ENCODE measurements at regions of chr1 and their contacts with region 1.

Region 1: GRCh38 chr1:199948587-199949280 is 78.8 kb upstream of the NR5A2 start:
- DNase-seq: peak; percentile 14
- ATAC-seq: peak; percentile 51
- H3K4me3 Mint-ChIP-seq: no peak overlapping the region
- H3K27ac Mint-ChIP-seq: no peak overlapping the region
- H3K4me1 Mint-ChIP-seq: peaks cover 2% of the 10 kb centered on the region
- H3K27me3 Mint-ChIP-seq: peaks cover 42% of the 10 kb centered on the region
- CTCF ChIP-seq: no peak

Region 2: GRCh38 chr1:199931653-199932377 is 16.9 kb before region 1 on chr1:
- CTCF ChIA-PET with region 1: no interaction called
- POLR2A ChIA-PET with region 1: no interaction called
- intact Hi-C with region 1: no loop called
- DNase-seq: peak; percentile 38
- ATAC-seq: no peak
- H3K4me3 Mint-ChIP-seq: no peak overlapping the region
- H3K27ac Mint-ChIP-seq: no peak overlapping the region
- H3K4me1 Mint-ChIP-seq: peaks cover 9% of the 10 kb centered on the region
- H3K27me3 Mint-ChIP-seq: peaks cover 20% of the 10 kb centered on the region
- CTCF ChIP-seq: no peak

Region 3: GRCh38 chr1:199982606-199983005 is 33.9 kb after region 1 on chr1:
- CTCF ChIA-PET with region 1: no interaction called
- POLR2A ChIA-PET with region 1: no interaction called
- intact Hi-C with region 1: no loop called
- DNase-seq: no peak
- ATAC-seq: no peak
- H3K4me3 Mint-ChIP-seq: no peak overlapping the region
- H3K27ac Mint-ChIP-seq: no peak overlapping the region
- H3K4me1 Mint-ChIP-seq: no peaks in the 10 kb centered on the region
- H3K27me3 Mint-ChIP-seq: peaks cover 3% of the 10 kb centered on the region
- CTCF ChIP-seq: no peak

Region 4: DNA sequence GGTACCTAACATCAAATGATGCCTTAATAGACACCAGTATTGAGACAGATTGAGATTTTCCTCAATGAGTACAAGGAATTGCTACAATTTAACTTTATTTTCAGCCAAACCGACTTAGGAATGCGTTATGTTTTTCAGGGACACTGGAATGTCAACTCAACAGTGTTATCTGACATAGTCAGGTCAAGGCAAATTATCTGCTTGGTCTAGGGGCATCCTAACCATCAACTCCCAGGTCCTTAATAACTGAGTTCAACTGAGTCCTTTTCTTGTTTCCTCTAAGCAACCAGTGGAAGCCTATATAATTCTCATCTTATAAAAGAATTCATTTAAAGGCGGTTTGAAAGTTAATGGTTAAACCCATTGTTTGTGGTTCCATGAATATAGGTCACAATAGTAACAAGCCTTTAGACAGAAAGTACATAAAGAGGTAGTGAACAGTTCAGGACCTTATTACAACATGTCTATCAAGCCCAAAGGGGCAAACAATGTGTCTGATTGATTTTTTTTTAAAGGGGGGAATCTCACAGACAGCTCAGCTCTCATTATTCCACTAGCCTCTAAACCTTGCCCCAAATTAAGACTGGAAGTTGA is 46.5 kb after region 1 on chr1:
- CTCF ChIA-PET with region 1: no interaction called
- POLR2A ChIA-PET with region 1: no interaction called
- intact Hi-C with region 1: no loop called
- DNase-seq: no peak
- ATAC-seq: no peak
- H3K4me3 Mint-ChIP-seq: no peak overlapping the region
- H3K27ac Mint-ChIP-seq: no peak overlapping the region
- H3K4me1 Mint-ChIP-seq: no peaks in the 10 kb centered on the region
- H3K27me3 Mint-ChIP-seq: peaks cover 4% of the 10 kb centered on the region
- CTCF ChIP-seq: no peak

Region 5: DNA sequence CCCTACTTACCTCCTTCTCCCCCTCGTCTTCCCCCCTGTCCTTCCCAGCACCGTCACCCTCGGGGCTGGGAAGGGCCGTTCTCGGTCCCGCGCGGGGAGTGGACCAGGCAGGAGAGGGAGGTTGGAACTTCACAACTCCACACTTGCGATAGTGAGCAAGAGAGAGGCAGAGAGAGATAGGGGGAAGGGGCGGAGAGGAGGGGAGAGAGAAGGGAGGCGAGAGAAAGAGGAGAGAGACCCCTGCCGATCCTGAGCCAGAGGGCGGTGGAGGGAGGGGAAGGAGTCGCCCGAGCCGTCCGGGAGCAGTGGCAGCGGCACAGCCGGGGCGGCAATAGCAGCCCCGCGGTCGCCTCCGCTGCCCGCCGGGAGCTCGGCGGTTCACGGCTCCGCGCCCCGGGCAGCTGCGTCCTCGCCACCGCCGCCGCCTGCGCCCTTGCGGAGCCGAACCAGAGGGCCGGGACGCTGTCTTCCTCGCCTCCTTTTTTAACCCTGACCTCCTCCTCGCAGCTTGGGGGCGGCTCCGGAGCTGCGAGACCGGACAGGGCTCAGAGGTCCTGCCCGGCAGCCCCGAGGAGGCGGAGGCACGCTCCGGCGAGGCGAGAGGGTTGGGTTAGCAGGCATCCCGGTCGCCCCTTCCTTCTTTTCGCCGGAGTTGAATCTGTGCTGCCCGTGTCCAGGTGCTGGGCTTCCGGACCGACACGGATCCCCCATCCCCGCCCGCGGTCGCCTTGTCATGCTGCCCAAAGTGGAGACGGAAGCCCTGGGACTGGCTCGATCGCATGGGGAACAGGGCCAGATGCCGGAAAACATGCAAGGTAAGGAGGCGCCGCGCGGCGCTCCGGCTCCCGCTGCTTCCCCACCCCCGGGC is 90.5 kb after region 1 on chr1:
- CTCF ChIA-PET with region 1: no interaction called
- POLR2A ChIA-PET with region 1: no interaction called
- intact Hi-C with region 1: loop called (anchors 10 kb)
- DNase-seq: peak; percentile 37
- ATAC-seq: peak; percentile 41
- H3K4me3 Mint-ChIP-seq: peak overlapping the region; percentile 64
- H3K27ac Mint-ChIP-seq: no peak overlapping the region
- H3K4me1 Mint-ChIP-seq: peaks cover 22% of the 10 kb centered on the region
- H3K27me3 Mint-ChIP-seq: peaks cover 46% of the 10 kb centered on the region
- CTCF ChIP-seq: no peak

Region 6: GRCh38 chr1:200053646-200054045 is 104.9 kb after region 1 on chr1:
- CTCF ChIA-PET with region 1: no interaction called
- POLR2A ChIA-PET with region 1: no interaction called
- intact Hi-C with region 1: no loop called
- DNase-seq: no peak
- ATAC-seq: no peak
- H3K4me3 Mint-ChIP-seq: no peak overlapping the region
- H3K27ac Mint-ChIP-seq: no peak overlapping the region
- H3K4me1 Mint-ChIP-seq: no peaks in the 10 kb centered on the region
- H3K27me3 Mint-ChIP-seq: peaks cover 13% of the 10 kb centered on the region
- CTCF ChIP-seq: no peak

Measured in activated CD8-positive, alpha-beta T cell treated with anti-CD3 and anti-CD28 coated beads for 36 hours (primary cell).